Endothelial cell of umbilical vein (primary cell): ENCODE measurements at regions of chr20 and their contacts with region 1.

Region 1: DNA sequence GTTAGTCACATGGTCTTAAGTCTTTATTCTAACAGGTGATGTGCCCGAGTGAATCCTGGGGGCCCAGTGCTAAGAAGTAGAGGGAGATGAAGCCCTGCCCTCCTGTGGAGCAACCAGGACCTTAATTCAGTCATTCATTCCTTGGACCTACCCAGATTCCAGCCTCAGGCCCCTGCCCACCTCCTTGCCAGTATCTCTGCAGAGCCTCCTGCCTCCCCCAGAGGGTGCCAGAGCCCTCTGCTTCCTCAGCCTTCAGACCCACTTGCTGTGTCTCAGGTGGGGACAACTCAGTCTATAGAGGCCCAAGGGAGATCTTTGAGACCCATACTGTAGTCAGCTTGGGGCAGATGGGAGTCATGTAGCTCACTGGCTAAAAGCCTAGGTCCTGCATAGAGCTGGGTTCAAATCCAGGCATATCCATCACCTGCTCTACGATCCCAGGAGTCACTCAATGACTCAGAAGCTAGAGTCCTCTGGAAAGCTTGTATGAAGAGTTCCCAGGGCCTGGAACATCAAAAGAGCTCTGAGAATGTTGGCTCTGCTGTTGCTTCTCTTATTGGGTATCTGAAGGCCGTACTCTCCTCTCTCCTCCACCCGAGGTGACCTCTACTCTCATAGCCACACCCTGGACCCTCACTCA is 3.9 kb upstream of the SIGLEC1 start:
- DNase-seq: peak; percentile 60
- H3K4me3 ChIP-seq: no peak overlapping the region
- H3K27ac ChIP-seq: no peak overlapping the region
- H3K4me1 ChIP-seq: peaks cover 6% of the 10 kb centered on the region
- H3K27me3 ChIP-seq: peaks cover under 1 to 5% of the 10 kb centered on the region in 2 experiments
- CTCF ChIP-seq: peak; percentile 83 to 88
- POLR2A ChIP-seq: no peak

Region 2: GRCh38 chr20:2955257-2955970 is 760.9 kb before region 1 on chr20:
- CTCF ChIA-PET with region 1: no interaction called
- POLR2A ChIA-PET with region 1: no interaction called
- dilution Hi-C with region 1: no loop called
- intact Hi-C with region 1: no loop called
- DNase-seq: no peak
- H3K4me3 ChIP-seq: no peak overlapping the region
- H3K27ac ChIP-seq: no peak overlapping the region
- H3K4me1 ChIP-seq: no peaks in the 10 kb centered on the region
- H3K27me3 ChIP-seq: no peaks in the 10 kb centered on the region
- CTCF ChIP-seq: no peak
- POLR2A ChIP-seq: no peak

Region 3: DNA sequence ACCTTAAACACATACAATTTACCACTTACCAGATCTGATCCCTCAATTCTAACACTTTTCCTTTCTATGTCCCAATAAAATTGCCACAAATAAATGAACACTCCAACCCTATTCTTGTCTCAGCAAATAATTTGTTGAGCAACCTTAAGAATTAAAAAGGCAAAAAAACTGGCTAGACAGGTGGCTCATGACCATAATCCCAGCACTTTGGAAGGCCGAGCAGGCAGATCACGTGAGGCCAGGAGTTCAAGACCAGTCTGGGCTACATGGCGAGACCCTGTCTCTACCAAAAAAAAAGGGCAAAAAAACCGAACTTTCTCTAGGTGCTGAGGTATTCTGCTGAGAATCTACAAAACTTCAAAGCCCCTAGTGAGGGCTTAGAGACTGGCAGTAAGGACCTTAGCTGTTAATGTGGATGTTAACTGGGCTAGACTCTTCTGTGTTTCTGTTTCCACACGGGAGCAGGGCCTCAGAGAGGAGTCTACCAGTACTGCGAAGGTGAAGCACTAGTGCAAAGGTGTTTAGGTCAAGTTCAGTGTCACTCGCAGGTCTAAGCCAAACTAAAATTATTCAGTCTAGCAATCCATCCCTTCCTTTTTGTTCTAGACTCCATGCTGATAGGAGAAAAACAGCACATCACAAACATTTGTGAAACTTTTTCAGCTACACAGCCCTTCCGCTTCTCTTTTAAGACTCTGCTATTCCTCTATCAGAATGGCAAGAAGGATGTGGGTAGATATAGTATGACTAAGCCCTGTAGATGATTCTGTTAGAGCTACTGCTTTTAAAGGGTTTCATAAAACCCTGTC is 559.3 kb before region 1 on chr20:
- CTCF ChIA-PET with region 1: no interaction called
- POLR2A ChIA-PET with region 1: no interaction called
- dilution Hi-C with region 1: no loop called
- intact Hi-C with region 1: no loop called
- DNase-seq: no peak
- H3K4me3 ChIP-seq: no peak overlapping the region
- H3K27ac ChIP-seq: no peak overlapping the region
- H3K4me1 ChIP-seq: peaks cover 14% of the 10 kb centered on the region
- H3K27me3 ChIP-seq: no peaks in the 10 kb centered on the region
- CTCF ChIP-seq: no peak
- POLR2A ChIP-seq: no peak

Region 4: GRCh38 chr20:3371754-3372153 is 344.6 kb before region 1 on chr20:
- CTCF ChIA-PET with region 1: no interaction called
- POLR2A ChIA-PET with region 1: no interaction called
- dilution Hi-C with region 1: no loop called
- intact Hi-C with region 1: no loop called
- DNase-seq: no peak
- H3K4me3 ChIP-seq: no peak overlapping the region
- H3K27ac ChIP-seq: no peak overlapping the region
- H3K4me1 ChIP-seq: no peaks in the 10 kb centered on the region
- H3K27me3 ChIP-seq: no peaks in the 10 kb centered on the region
- CTCF ChIP-seq: no peak
- POLR2A ChIP-seq: no peak

Region 5: GRCh38 chr20:3727401-3728021 is 11.2 kb after region 1 on chr20:
- CTCF ChIA-PET with region 1: interaction called, 40 read pairs
- POLR2A ChIA-PET with region 1: no interaction called
- dilution Hi-C with region 1: no loop called
- intact Hi-C with region 1: no loop called
- DNase-seq: no peak
- H3K4me3 ChIP-seq: no peak overlapping the region
- H3K27ac ChIP-seq: no peak overlapping the region
- H3K4me1 ChIP-seq: no peaks in the 10 kb centered on the region
- H3K27me3 ChIP-seq: peaks cover 7 to 10% of the 10 kb centered on the region in 2 experiments
- CTCF ChIP-seq: no peak
- POLR2A ChIP-seq: no peak

Region 6: DNA sequence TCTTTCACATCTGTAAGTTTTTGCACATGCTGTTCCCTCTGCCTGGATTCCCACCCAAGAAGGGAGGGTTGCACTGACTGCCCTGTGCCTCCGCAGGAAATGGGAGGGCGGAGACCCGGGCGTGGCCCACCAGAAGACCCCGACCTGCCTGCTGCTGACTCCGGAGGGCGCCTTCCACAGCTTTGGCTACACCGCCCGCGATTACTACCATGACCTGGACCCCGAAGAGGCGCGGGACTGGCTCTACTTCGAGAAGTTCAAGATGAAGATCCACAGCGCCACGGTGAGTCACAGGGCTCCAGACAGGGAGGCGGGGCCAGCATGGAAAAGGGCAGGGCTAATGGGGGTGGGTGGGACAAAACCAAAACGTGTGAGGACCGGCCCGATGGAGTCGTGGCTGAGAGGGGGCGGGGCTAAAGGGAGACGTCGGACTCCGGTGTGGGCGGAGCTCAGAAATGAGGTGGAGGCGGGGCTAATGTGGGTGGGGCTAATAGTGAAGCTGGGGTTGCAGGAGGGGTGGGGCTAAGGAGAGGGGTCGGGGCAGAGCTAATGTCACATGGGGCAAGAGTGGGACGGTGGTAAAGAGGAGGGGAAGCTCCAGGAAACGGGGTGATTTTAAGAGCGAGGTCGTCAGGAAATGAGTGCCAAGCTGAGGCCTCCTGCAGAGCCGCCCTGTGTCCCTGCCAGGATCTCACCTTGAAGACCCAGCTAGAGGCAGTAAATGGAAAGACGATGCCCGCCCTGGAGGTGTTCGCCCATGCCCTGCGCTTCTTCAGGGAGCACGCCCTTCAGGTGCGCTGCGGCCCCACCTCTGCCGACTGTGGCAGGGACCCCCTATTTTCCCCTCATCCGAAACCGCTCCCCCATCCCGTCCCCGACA is 28.7 kb after region 1 on chr20:
- CTCF ChIA-PET with region 1: interaction called, 75 read pairs
- POLR2A ChIA-PET with region 1: no interaction called
- dilution Hi-C with region 1: no loop called
- intact Hi-C with region 1: loop called (anchors 1 kb)
- DNase-seq: peak; percentile 73
- H3K4me3 ChIP-seq: no peak overlapping the region
- H3K27ac ChIP-seq: no peak overlapping the region
- H3K4me1 ChIP-seq: no peaks in the 10 kb centered on the region
- H3K27me3 ChIP-seq: no peaks in the 10 kb centered on the region
- CTCF ChIP-seq: no peak
- POLR2A ChIP-seq: no peak

Region 7: GRCh38 chr20:3767427-3768341 is 51.4 kb after region 1 on chr20 and contains the start of gene ADISSP:
- CTCF ChIA-PET with region 1: interaction called, 52 read pairs
- POLR2A ChIA-PET with region 1: no interaction called
- dilution Hi-C with region 1: no loop called
- intact Hi-C with region 1: loop called (anchors 1 kb)
- DNase-seq: peak; percentile 98
- H3K4me3 ChIP-seq: peak within 1 kb of the TSS; percentile 61 to 71 (median 61)
- H3K27ac ChIP-seq: peak within 1 kb of the TSS; percentile 55
- H3K4me1 ChIP-seq: peaks cover 25% of the 10 kb centered on the region
- H3K27me3 ChIP-seq: no peaks in the 10 kb centered on the region
- CTCF ChIP-seq: no peak
- POLR2A ChIP-seq: peak; percentile 72
- total RNA-seq, gene ADISSP: 55.0 and 55.8 TPM in 2 replicates

Region 8: GRCh38 chr20:3786665-3787323 is 70.5 kb after region 1 on chr20 and contains the start of gene CENPB:
- CTCF ChIA-PET with region 1: interaction called, 32 read pairs
- POLR2A ChIA-PET with region 1: no interaction called
- dilution Hi-C with region 1: no loop called
- intact Hi-C with region 1: loop called (anchors 1 kb)
- DNase-seq: peak; percentile 83
- H3K4me3 ChIP-seq: peak within 1 kb of the TSS; percentile 30 to 62 (median 58)
- H3K27ac ChIP-seq: peak within 1 kb of the TSS; percentile 0
- H3K4me1 ChIP-seq: peaks cover 18% of the 10 kb centered on the region
- H3K27me3 ChIP-seq: no peaks in the 10 kb centered on the region
- CTCF ChIP-seq: peak; percentile 56 to 62
- POLR2A ChIP-seq: no peak
- total RNA-seq, gene CENPB: 82.2 and 90.3 TPM in 2 replicates

Region 9: DNA sequence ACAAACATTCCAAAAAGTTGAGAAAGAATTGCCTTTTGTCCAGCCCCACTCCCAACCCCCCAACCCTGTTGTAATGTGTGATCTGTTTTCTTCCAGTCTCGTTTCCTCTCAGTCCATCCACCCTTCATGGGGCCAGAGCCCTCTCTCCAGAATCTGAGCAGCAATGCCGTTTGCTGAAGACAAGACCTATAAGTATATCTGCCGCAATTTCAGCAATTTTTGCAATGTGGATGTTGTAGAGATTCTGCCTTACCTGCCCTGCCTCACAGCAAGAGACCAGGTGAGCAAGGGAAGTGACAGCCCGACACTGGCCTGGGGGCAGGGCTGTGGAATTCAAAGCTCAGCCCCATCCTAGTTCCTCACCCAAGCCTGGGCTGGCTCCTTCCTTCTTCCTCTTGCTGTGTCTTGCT is 138.2 kb after region 1 on chr20:
- CTCF ChIA-PET with region 1: interaction called, 25 read pairs
- POLR2A ChIA-PET with region 1: no interaction called
- dilution Hi-C with region 1: no loop called
- intact Hi-C with region 1: loop called (anchors 1 kb)
- DNase-seq: no peak
- H3K4me3 ChIP-seq: no peak overlapping the region
- H3K27ac ChIP-seq: no peak overlapping the region
- H3K4me1 ChIP-seq: no peaks in the 10 kb centered on the region
- H3K27me3 ChIP-seq: no peaks in the 10 kb centered on the region
- CTCF ChIP-seq: no peak
- POLR2A ChIP-seq: no peak

Region 10: DNA sequence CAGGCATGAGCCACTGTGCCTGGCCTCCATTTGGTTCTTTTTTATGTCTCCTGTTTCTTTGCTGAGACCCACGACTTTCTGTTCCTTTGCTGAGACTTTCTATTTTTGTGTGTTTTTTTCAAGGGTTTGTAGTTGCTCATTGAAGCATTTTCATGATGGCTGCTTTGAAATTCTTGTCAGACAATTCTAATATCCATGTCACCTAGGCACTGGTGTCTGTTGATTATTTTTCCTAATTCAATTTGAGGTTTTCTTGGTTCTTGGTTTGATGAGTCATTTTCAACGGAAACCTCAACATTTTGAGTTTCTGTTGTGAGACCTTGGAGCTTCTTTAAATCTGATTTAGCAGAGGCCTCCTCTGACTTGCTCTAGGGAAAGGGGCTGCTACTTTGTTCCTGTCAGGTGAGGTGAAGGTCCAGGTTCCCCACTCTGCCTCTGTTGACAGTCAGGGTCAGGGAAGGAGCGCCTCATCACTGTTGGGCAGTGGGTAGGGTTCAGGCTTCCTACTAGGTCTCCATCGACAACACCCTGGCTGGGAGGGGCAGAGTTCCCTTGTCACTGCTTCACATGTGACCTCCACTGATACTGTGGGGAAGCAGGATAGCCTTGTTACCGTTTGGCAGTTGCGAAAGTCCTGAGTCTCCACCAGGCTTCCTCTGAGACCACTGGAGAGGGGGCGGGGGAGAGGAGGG is 366.2 kb after region 1 on chr20:
- CTCF ChIA-PET with region 1: interaction called, 8 read pairs
- POLR2A ChIA-PET with region 1: no interaction called
- dilution Hi-C with region 1: no loop called
- intact Hi-C with region 1: loop called (anchors 1 kb)
- DNase-seq: no peak
- H3K4me3 ChIP-seq: no peak overlapping the region
- H3K27ac ChIP-seq: no peak overlapping the region
- H3K4me1 ChIP-seq: peaks cover 7% of the 10 kb centered on the region
- H3K27me3 ChIP-seq: no peaks in the 10 kb centered on the region
- CTCF ChIP-seq: no peak
- POLR2A ChIP-seq: no peak